Activated CD4-positive, alpha-beta memory T cell treated with anti-CD3 and anti-CD28 coated beads, Interleukin-2, amount 10 ng/mL, durations not matched to agents 7 days and 5 days (primary cell): ENCODE measurements at regions of chrX and their contacts with region 1.

Region 1: DNA sequence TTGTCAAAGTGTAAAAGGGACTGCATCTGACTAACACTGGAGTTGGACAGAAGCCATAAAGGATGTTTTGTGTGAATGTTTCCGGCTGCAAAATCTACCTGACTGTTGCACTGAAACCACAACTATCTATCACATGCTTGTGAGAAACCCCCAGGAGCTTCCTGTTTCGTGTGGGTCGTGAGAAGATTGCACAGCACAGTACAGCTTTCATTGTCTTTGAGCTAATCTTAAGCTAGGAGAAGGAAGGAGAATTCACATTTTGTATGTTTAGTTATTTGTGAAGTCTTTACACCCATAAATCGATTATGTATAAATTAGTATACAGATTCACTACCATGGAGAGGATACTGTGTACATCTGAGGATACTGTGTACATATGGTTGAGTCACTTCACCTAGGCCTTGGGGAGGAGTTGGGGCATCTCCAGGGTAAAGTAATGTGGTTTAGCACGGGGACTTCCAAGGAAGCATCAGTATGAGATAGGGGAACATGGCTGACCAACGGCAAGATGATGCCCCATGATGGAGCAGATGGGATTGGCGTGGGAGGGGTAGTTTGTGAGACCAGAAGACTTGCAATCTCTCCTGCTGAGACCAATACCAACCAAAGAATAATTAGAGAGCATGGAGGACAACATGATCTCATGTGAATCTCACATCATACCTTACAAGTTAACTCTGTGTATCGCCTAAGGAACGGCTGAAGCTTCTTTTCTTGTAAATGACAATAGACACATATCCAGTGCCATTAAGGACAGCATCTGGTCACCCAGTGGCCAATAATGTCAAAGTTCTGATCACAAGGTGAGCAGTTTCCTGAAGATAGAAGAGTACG is 43.1 kb upstream of the FAM9C start:
- DNase-seq: peak; percentile 68
- H3K4me3 Mint-ChIP-seq: peak overlapping the region; percentile 81
- H3K27ac Mint-ChIP-seq: peak overlapping the region; percentile 99
- H3K4me1 Mint-ChIP-seq: peaks cover 85% of the 10 kb centered on the region
- H3K27me3 Mint-ChIP-seq: no peaks in the 10 kb centered on the region

Region 2: GRCh38 chrX:12967711-12968465 is 119.7 kb before region 1 on chrX:
- CTCF ChIA-PET with region 1: interaction called, 210 read pairs
- POLR2A ChIA-PET with region 1: interaction called, 1,502 read pairs
- DNase-seq: peak; percentile 48
- H3K4me3 Mint-ChIP-seq: peak overlapping the region; percentile 63
- H3K27ac Mint-ChIP-seq: peak overlapping the region; percentile 94
- H3K4me1 Mint-ChIP-seq: peaks cover 55% of the 10 kb centered on the region
- H3K27me3 Mint-ChIP-seq: no peaks in the 10 kb centered on the region

Region 3: DNA sequence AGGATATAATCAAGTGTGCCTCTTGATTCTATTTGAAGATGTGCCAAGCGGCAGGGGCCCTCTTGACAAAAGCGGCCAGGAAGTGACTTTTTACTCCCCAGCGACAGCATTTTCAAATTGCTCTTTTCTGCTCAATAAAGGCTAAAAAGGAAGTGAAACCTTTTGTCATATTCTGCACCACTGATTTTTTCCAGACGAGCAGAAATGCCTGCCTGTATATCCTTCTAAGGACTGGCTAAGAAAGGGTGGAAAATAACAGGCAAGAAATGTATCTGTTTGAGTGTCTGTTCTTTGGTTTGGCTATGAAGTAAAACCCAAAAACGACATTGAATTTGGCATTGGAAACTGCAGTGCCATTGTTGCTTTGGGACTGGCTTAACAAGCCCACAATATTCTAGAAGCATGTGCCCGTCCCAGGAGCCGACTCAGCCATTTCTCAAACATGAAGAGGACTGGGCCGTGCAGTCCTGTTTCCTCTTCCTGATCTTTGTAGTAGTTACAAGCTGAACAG is 87.2 kb before region 1 on chrX:
- CTCF ChIA-PET with region 1: interaction called, 31 read pairs
- POLR2A ChIA-PET with region 1: interaction called, 380 read pairs
- DNase-seq: peak; percentile 42
- H3K4me3 Mint-ChIP-seq: peak overlapping the region; percentile 73
- H3K27ac Mint-ChIP-seq: peak overlapping the region; percentile 94
- H3K4me1 Mint-ChIP-seq: peaks cover 78% of the 10 kb centered on the region
- H3K27me3 Mint-ChIP-seq: no peaks in the 10 kb centered on the region

Region 4: GRCh38 chrX:13013363-13014110 is 74.0 kb before region 1 on chrX:
- CTCF ChIA-PET with region 1: interaction called, 11 read pairs
- POLR2A ChIA-PET with region 1: interaction called, 380 read pairs
- DNase-seq: no peak
- H3K4me3 Mint-ChIP-seq: peak overlapping the region; percentile 6
- H3K27ac Mint-ChIP-seq: peak overlapping the region; percentile 84
- H3K4me1 Mint-ChIP-seq: peaks cover 66% of the 10 kb centered on the region
- H3K27me3 Mint-ChIP-seq: no peaks in the 10 kb centered on the region

Region 5: DNA sequence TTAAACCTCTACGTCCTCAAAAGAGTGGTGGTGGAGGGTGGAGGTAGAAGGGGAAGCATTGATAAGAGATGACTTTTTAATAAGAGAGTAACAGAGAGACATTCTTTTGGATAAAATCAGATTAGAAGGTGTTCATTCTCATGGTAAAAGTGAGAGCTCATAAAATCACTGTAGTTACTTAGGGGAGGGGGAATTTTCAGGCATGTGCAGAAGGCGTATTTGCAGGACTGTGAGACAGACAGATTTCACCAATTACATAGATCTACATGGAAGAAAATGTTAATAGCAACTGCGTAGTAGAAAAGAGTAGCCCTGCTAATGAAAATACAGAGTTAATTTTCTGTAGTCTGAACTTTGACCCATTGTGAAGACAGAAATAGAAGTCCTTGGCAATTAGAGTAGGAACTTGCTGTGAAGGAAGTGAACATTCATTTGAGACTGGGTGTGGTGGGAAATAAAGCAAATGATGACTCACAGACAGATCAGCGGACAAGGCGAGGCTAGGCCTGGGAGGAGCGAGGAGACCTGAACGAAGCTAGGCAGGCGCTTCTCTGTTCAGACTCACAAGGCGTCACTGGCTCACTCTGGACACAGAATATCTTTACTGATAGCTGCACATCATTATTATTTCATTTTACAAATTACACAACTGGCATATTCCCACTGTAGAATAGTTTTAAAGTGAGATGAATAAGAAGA is 14.1 kb after region 1 on chrX:
- CTCF ChIA-PET with region 1: interaction called, 16 read pairs
- POLR2A ChIA-PET with region 1: interaction called, 9 read pairs
- DNase-seq: peak; percentile 66
- H3K4me3 Mint-ChIP-seq: no peak overlapping the region
- H3K27ac Mint-ChIP-seq: peak overlapping the region; percentile 76
- H3K4me1 Mint-ChIP-seq: peaks cover 62% of the 10 kb centered on the region
- H3K27me3 Mint-ChIP-seq: no peaks in the 10 kb centered on the region

Region 6: GRCh38 chrX:13198056-13198761 is 110.7 kb after region 1 on chrX:
- CTCF ChIA-PET with region 1: no interaction called
- POLR2A ChIA-PET with region 1: no interaction called
- DNase-seq: no peak
- H3K4me3 Mint-ChIP-seq: no peak overlapping the region
- H3K27ac Mint-ChIP-seq: no peak overlapping the region
- H3K4me1 Mint-ChIP-seq: no peaks in the 10 kb centered on the region
- H3K27me3 Mint-ChIP-seq: no peaks in the 10 kb centered on the region